Ovary (tissue), 10 donors: ENCODE measurements at regions of chr2 and their contacts with region 1.

Region 1: DNA sequence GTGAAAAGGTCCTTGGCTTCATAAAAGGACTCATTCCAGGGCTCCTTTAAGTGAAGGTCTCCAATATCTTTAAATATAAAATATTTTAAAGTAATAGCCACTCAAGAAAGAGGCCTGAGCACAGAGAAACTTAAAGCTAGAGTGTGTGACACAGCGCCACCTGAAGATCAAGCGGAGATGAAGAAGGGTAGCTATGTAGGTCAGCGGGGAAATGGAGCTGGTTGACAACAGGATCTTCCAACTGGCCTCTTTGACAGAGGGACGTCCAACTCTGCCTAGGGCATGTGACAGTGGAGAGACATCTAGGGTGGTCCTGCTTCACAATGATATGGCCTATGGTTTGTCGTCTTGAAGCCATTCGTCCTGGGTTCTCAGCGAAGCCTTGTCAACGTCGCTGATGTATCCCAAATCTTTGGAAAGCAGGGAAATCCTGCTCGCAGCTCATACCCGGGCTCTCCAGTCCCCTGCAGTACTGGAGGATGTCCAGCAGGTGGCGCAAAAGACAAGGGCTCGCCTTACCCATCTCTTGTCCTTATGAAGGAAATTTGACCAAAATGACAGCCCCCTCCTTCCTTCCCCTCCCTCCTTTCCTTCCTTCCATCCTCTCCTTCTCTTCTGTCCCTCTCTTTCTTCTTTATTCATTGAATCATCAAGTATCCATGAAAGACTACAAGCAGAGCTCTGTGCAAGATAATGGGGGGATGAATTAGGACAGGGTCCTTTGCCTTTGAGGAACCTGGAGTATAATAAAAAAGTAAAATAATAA is 59.6 kb downstream of the LONRF2 start:
- DNase-seq: peak; percentile 69 to 89 (median 83)
- H3K4me3 ChIP-seq: no peak overlapping the region
- H3K27ac ChIP-seq: no peak overlapping the region
- H3K4me1 ChIP-seq: no peaks in the 10 kb centered on the region
- H3K27me3 ChIP-seq: no peaks in the 10 kb centered on the region
- CTCF ChIP-seq: peak; percentile 87 to 95 (median 92)
- EP300 ChIP-seq: no peak
- POLR2A ChIP-seq: no peak

Region 2: DNA sequence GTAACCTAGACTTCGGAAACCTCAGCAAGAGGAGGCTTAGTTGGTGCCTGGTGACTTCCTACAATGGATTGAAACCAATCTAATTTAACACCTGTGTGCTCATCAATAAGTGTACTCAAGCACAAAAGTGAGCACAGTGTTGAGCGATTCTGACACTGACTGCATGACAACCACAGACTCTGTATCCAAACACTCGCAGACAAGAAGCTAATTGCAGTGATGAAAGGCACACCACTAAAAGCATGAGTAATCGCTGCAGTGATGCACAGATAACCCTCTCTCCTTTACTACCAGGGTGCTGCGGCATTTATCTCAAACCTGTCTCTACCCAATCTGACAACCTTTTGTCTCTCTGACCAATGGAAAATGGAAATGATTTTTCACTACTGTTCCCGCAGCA is 288.5 kb before region 1 on chr2:
- intact Hi-C with region 1: no loop called
- DNase-seq: no peak
- H3K4me3 ChIP-seq: no peak overlapping the region
- H3K27ac ChIP-seq: no peak overlapping the region
- H3K4me1 ChIP-seq: peaks cover 1% of the 10 kb centered on the region
- H3K27me3 ChIP-seq: no peaks in the 10 kb centered on the region
- CTCF ChIP-seq: no peak
- EP300 ChIP-seq: no peak
- POLR2A ChIP-seq: no peak

Region 3: GRCh38 chr2:100142393-100142792 is 120.3 kb before region 1 on chr2 and contains the start of gene AFF3:
- intact Hi-C with region 1: no loop called
- DNase-seq: no peak
- H3K4me3 ChIP-seq: no peak within 1 kb of the TSS
- H3K27ac ChIP-seq: no peak within 1 kb of the TSS
- H3K4me1 ChIP-seq: no peaks in the 10 kb centered on the region
- H3K27me3 ChIP-seq: no peaks in the 10 kb centered on the region
- CTCF ChIP-seq: no peak
- EP300 ChIP-seq: no peak
- POLR2A ChIP-seq: no peak
- total RNA-seq, gene AFF3: 16.1 to 40.8 (median 25.9) TPM

Region 4: GRCh38 chr2:100381240-100381639 is 118.5 kb after region 1 on chr2:
- intact Hi-C with region 1: loop called (anchors 2 to 5 kb)
- DNase-seq: peak; percentile 80 to 90 (median 85)
- H3K4me3 ChIP-seq: no peak overlapping the region
- H3K27ac ChIP-seq: no peak overlapping the region
- H3K4me1 ChIP-seq: no peaks in the 10 kb centered on the region
- H3K27me3 ChIP-seq: no peaks in the 10 kb centered on the region
- CTCF ChIP-seq: peak; percentile 75 to 96 (median 82)
- EP300 ChIP-seq: no peak
- POLR2A ChIP-seq: peak; percentile 14

Region 5: GRCh38 chr2:100407108-100407507 is 144.4 kb after region 1 on chr2:
- intact Hi-C with region 1: no loop called
- DNase-seq: no peak
- H3K4me3 ChIP-seq: no peak overlapping the region
- H3K27ac ChIP-seq: no peak overlapping the region
- H3K4me1 ChIP-seq: no peaks in the 10 kb centered on the region
- H3K27me3 ChIP-seq: no peaks in the 10 kb centered on the region
- CTCF ChIP-seq: no peak
- EP300 ChIP-seq: no peak
- POLR2A ChIP-seq: no peak

Region 6: GRCh38 chr2:100470898-100471514 is 208.3 kb after region 1 on chr2:
- intact Hi-C with region 1: no loop called
- DNase-seq: peak in 4 of 5 donors; percentile 21 to 65 (median 50)
- H3K4me3 ChIP-seq: no peak overlapping the region
- H3K27ac ChIP-seq: no peak overlapping the region
- H3K4me1 ChIP-seq: no peaks in the 10 kb centered on the region
- H3K27me3 ChIP-seq: no peaks in the 10 kb centered on the region
- CTCF ChIP-seq: no peak
- EP300 ChIP-seq: no peak
- POLR2A ChIP-seq: no peak